OCI-LY7 (cell line): ENCODE measurements at regions of chr2 and their contacts with region 1.

Region 1: GRCh38 chr2:25606892-25607291 is 66.5 kb downstream of the DTNB start:
- DNase-seq: peak; percentile 47
- H3K4me3 ChIP-seq: no peak overlapping the region
- H3K27ac ChIP-seq: no peak overlapping the region
- H3K4me1 ChIP-seq: no peaks in the 10 kb centered on the region
- CTCF ChIP-seq: peak; percentile 93

Region 2: DNA sequence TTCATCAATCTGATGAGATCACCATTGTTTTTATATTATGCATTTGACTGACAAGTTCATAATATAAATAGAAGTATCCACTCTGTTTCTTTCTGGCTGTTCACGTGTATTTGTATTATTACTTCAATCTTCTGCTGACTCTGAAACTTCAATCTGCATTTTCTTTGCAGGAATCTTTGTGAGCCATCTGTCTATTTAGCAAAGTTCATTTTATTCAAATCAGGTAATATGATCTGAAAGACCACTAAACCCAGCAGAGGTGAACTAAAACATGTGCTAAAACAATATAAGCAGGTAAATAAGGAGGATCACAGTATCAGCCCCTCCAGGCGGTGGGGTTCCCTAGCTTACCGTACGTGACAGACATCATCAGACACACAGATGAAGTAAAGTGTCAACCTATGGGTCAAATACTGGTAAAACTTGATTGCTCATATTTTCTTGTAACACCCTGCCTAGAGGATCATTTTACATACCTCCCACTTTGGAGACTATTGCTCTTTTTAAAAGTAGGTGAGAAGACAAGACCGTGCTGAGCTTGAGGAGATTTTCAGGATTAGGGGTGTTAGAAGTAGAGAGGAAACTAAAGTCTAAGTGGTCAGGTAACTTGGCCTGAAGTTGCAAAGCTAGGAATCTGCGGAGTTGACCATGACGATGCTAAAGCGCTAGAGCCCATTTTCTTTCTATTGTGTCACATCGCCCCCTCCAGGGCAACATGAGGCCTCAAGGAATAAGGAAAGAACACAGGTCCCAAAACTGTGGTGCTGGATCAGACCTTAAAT is 57.5 kb after region 1 on chr2:
- CTCF ChIA-PET with region 1: no interaction called
- POLR2A ChIA-PET with region 1: interaction called, 4 read pairs
- intact Hi-C with region 1: loop called (anchors 5 kb)
- DNase-seq: peak; percentile 55
- H3K4me3 ChIP-seq: no peak overlapping the region
- H3K27ac ChIP-seq: no peak overlapping the region
- H3K4me1 ChIP-seq: no peaks in the 10 kb centered on the region
- CTCF ChIP-seq: peak; percentile 85

Region 3: DNA sequence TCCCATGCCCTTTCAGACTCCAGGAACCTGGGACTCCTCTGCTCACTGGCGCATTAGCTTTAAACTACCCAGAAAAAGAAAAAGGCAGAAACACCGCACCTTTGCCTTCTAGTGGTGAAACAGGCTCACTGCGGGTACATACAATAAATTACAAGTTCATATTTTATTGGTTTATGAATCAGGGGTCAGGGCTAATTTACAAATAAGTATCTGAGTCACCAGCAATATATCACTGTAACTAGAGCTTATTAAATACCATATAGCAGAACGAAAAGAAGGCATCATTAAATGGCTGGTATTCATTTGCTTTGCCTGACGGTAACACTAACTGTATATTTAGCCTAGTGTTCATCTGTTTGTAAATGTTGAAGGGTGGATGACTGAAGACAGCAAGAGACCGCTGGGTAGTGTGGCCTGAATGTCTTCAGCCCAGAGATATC is 93.3 kb after region 1 on chr2:
- CTCF ChIA-PET with region 1: interaction called, 3 read pairs
- POLR2A ChIA-PET with region 1: interaction called, 4 read pairs
- intact Hi-C with region 1: loop called (anchors 1 kb)
- DNase-seq: peak; percentile 56
- H3K4me3 ChIP-seq: no peak overlapping the region
- H3K27ac ChIP-seq: no peak overlapping the region
- H3K4me1 ChIP-seq: no peaks in the 10 kb centered on the region
- CTCF ChIP-seq: peak; percentile 91